ENCODE measurements at regions of chr6 and their contacts with region 1.

Region 1: GRCh38 chr6:32195652-32195901 is 3.1 kb upstream of the GPSM3 start:
- DNase-seq: peak; percentile 100
- H3K4me3 ChIP-seq: no peak overlapping the region
- H3K27ac ChIP-seq: peak overlapping the region; percentile 99
- H3K4me1 ChIP-seq: peaks cover 36% of the 10 kb centered on the region
- H3K27me3 ChIP-seq: no peaks in the 10 kb centered on the region
- CTCF ChIP-seq: peak; percentile 21 to 57
- POLR2A ChIP-seq: no peak

Region 2: DNA sequence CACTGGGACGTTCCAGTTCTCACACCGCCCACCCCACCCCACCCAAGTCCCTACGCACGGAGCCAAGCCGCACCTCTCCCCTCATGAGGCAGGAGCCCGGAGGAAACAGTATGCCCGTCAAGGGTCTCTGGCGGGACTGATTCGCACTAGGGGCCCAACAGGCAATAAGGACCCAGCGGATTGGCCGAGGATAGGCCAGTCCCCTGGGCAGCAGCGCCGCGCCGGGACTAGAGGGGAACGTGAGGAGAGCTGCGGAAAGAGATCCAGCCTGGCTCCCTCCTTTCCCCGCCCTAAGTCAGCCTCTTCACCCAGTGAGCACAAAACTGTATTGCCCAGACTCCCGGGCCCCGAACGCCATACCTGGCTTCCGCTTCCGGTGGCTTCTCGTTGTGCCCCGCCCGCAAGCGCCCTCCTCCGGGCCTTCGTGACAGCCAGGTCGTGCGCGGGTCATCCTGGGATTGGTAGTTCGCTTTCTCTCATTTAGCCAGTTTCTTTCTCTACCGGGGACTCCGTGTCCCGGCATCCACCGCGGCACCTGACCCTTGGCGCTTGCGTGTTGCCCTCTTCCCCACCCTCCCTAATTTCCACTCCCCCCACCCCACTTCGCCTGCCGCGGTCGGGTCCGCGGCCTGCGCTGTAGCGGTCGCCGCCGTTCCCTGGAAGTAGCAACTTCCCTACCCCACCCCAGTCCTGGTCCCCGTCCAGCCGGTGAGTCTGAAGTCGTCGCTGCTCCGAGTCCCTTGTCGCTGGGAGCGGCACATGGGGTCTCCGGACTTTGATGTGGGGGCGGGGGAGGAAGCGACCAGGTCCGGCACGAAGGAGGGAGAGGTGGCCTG is 529.9 kb before region 1 on chr6 and contains the start of gene CSNK2B:
- CTCF ChIA-PET with region 1: no interaction called
- POLR2A ChIA-PET with region 1: no interaction called
- dilution Hi-C with region 1: no loop called
- intact Hi-C with region 1: loop called (anchors 10 kb)
- DNase-seq: peak; percentile 97
- H3K4me3 ChIP-seq: peak within 1 kb of the TSS; percentile 70 to 94 (median 72)
- H3K27ac ChIP-seq: peak within 1 kb of the TSS; percentile 77
- H3K4me1 ChIP-seq: peaks cover 28% of the 10 kb centered on the region
- H3K27me3 ChIP-seq: no peaks in the 10 kb centered on the region
- CTCF ChIP-seq: peak in 1 of 2 donors; percentile 13
- POLR2A ChIP-seq: peak; percentile 54
- total RNA-seq, gene CSNK2B: 206 and 214 TPM in 2 replicates

Region 3: GRCh38 chr6:32118782-32119628 is 76.6 kb before region 1 on chr6:
- CTCF ChIA-PET with region 1: interaction called, 24 read pairs
- POLR2A ChIA-PET with region 1: no interaction called
- dilution Hi-C with region 1: no loop called
- intact Hi-C with region 1: loop called (anchors 1 kb)
- DNase-seq: peak; percentile 87
- H3K4me3 ChIP-seq: no peak overlapping the region
- H3K27ac ChIP-seq: no peak overlapping the region
- H3K4me1 ChIP-seq: no peaks in the 10 kb centered on the region
- H3K27me3 ChIP-seq: no peaks in the 10 kb centered on the region
- CTCF ChIP-seq: peak; percentile 92 to 96
- POLR2A ChIP-seq: no peak

Region 4: GRCh38 chr6:32148289-32149091 is 47.1 kb before region 1 on chr6:
- CTCF ChIA-PET with region 1: interaction called, 9 read pairs
- POLR2A ChIA-PET with region 1: interaction called, 4 read pairs
- dilution Hi-C with region 1: no loop called
- intact Hi-C with region 1: loop called (anchors 1 kb)
- DNase-seq: peak; percentile 66
- H3K4me3 ChIP-seq: peak overlapping the region; percentile 11 to 53 (median 30)
- H3K27ac ChIP-seq: no peak overlapping the region
- H3K4me1 ChIP-seq: peaks cover 16% of the 10 kb centered on the region
- H3K27me3 ChIP-seq: peaks cover 24 to 27% of the 10 kb centered on the region in 2 experiments
- CTCF ChIP-seq: peak; percentile 37 to 40
- POLR2A ChIP-seq: no peak

Region 5: DNA sequence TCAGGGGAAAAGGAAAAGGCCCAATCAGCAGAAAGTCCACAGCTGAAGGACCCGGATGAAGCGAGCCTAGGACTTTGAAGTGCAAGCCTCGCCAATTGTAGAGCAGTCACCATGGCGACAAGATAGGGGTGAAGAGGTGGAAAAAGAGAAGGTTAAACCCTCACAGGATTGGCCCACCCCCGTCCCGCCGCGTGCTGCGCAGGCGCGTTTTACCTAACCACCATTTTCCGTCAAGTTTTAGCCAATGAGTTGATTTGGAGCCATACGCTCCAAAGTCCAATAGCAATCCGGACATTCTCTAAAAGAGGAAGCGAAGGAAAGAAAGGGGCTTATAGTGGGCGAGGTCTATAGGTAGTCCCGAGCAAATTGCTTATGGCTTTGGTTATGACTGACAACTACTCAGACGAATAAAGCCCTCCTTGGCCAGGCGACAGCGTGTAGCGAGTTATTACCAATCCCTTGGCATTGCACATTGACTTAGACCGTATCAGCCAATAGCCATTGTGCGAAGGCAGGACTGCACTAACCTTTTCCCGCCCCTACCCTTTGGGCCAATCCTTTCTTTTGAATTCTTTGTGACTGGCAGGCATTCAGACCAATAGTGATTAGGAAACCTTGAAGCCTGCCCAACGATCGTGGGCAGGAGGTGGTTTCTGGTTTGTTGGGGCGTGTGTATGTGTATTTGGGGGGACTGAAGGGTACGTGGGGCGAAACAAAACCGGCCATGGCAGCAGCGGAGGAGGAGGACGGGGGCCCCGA is 17.6 kb before region 1 on chr6 and contains the start of gene RNF5:
- CTCF ChIA-PET with region 1: interaction called, 15 read pairs
- POLR2A ChIA-PET with region 1: interaction called, 9 read pairs
- dilution Hi-C with region 1: no loop called
- intact Hi-C with region 1: loop called (anchors 1 kb)
- DNase-seq: peak; percentile 100
- H3K4me3 ChIP-seq: peak within 1 kb of the TSS; percentile 56 to 67 (median 66)
- H3K27ac ChIP-seq: peak within 1 kb of the TSS; percentile 83
- H3K4me1 ChIP-seq: peaks cover 30% of the 10 kb centered on the region
- H3K27me3 ChIP-seq: no peaks in the 10 kb centered on the region
- CTCF ChIP-seq: no peak
- POLR2A ChIP-seq: no peak
- total RNA-seq, gene RNF5: 48.0 and 49.2 TPM in 2 replicates

Region 6: GRCh38 chr6:32255199-32256153 is 59.9 kb after region 1 on chr6:
- CTCF ChIA-PET with region 1: no interaction called
- POLR2A ChIA-PET with region 1: no interaction called
- dilution Hi-C with region 1: no loop called
- intact Hi-C with region 1: loop called (anchors 1 kb)
- DNase-seq: peak; percentile 91
- H3K4me3 ChIP-seq: peak overlapping the region in 1 of 3 experiments; percentile 19
- H3K27ac ChIP-seq: peak overlapping the region; percentile 79
- H3K4me1 ChIP-seq: peaks cover 27% of the 10 kb centered on the region
- H3K27me3 ChIP-seq: no peaks in the 10 kb centered on the region
- CTCF ChIP-seq: peak; percentile 33 to 86
- POLR2A ChIP-seq: peak; percentile 72

Region 7: GRCh38 chr6:33192671-33193602 is 997.4 kb after region 1 on chr6:
- CTCF ChIA-PET with region 1: no interaction called
- POLR2A ChIA-PET with region 1: no interaction called
- dilution Hi-C with region 1: no loop called
- intact Hi-C with region 1: no loop called
- DNase-seq: no peak
- H3K4me3 ChIP-seq: peak overlapping the region in 2 of 3 experiments; percentile 16 to 19
- H3K27ac ChIP-seq: no peak overlapping the region
- H3K4me1 ChIP-seq: peaks cover 6% of the 10 kb centered on the region
- H3K27me3 ChIP-seq: peaks cover 21% of the 10 kb centered on the region in 2 experiments
- CTCF ChIP-seq: no peak
- POLR2A ChIP-seq: no peak